Activated CD4-positive, alpha-beta T cell treated with anti-CD3 and anti-CD28 coated beads, Interleukin-2, amount 10 ng/mL, durations not matched to agents 24 days and 14 days (primary cell): ENCODE measurements at regions of chr12 and their contacts with region 1.

Region 1: DNA sequence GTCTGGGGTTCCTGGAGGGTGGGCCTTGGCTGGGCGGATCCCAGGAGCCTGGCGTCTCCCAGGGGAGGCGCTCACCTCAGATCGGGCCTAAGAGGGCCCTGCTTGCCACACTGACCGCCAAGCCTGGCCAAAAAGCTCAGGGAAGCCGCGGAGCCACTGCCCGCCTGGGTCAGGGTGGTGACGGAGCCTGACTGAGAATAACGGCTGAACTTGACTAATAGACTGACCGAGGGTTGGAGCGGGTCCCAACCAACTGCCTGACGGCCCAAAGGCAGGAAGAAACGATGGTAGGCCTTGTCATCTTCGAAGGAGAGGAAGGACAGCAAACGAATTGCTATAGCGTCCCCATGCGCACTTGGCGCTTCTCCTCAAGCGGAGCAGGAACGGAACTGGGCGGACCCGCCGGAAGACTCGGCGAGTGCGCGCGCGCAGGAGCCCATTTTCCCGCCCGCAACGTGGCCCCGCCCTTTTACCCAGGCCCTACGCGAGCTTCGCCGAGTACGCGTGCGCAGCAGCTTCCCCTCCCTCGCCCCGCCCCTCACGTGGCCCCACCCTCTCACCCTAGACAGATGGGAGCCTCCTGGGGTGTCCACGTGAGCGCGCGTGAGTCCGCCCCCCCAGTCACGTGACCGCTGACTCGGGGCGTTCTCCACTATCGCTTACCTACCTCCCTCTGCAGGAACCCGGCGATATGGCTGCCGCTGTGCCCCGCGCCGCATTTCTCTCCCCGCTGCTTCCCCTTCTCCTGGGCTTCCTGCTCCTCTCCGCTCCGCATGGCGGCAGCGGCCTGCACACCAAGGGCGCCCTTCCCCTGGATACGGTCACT is at the starts of genes ERP29 and TMEM116:
- DNase-seq: peak; percentile 100
- H3K4me3 Mint-ChIP-seq: peak within 1 kb of the TSS; percentile 93
- H3K27ac Mint-ChIP-seq: peak within 1 kb of the TSS; percentile 98
- H3K4me1 Mint-ChIP-seq: peaks cover 42% of the 10 kb centered on the region
- H3K27me3 Mint-ChIP-seq: no peaks in the 10 kb centered on the region
- total RNA-seq, gene ERP29: 56.6 and 60.9 TPM in 2 replicates
- total RNA-seq, gene TMEM116: 9.7 and 11.1 TPM in 2 replicates

Region 2: DNA sequence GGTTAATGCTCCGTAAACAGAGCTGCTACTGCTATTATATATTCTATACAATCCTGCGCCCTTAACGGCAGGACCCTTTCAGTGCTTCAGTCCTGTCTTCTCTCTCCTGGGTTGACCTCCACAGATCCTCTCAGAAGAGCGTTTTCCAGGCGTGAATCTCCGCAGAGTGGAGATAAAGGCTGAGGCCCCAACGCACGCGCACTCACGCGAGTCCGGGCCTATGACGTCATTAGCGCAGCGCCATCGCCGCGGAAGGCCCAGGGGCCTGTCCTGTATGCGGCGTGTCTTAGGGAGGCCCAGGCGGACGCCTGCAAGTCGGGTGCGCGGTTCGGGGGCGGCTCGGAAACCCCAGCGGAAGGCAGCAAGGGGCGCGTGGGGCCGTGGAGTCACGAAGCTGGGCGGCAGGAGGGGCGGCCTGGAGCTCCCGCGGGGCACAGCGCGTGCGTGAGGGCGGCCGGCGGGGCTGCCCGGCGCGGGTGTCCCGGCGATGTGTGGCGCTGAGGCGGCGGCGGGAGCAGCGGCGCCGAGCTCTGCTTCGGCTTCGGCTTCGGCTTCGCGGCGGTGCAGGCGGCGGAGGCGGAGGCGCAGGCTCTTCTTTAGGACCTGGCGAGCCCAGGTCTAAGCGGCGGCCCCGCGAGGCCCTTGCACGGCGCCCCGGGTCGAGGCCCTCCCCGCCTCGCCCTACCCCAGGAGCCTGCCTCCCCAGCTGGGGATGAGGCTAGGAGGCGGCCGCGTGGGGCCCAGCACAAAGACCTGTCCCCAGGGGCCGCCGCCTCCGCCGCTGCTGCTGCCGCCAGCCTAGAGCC is 171.0 kb before region 1 on chr12 and contains the start of gene MAPKAPK5:
- intact Hi-C with region 1: loop called (anchors 1 kb)
- DNase-seq: peak; percentile 99
- H3K4me3 Mint-ChIP-seq: peak within 1 kb of the TSS; percentile 98
- H3K27ac Mint-ChIP-seq: peak within 1 kb of the TSS; percentile 98
- H3K4me1 Mint-ChIP-seq: peaks cover 40% of the 10 kb centered on the region
- H3K27me3 Mint-ChIP-seq: peaks cover 2% of the 10 kb centered on the region
- total RNA-seq, gene MAPKAPK5: 76.0 and 80.2 TPM in 2 replicates

Region 3: DNA sequence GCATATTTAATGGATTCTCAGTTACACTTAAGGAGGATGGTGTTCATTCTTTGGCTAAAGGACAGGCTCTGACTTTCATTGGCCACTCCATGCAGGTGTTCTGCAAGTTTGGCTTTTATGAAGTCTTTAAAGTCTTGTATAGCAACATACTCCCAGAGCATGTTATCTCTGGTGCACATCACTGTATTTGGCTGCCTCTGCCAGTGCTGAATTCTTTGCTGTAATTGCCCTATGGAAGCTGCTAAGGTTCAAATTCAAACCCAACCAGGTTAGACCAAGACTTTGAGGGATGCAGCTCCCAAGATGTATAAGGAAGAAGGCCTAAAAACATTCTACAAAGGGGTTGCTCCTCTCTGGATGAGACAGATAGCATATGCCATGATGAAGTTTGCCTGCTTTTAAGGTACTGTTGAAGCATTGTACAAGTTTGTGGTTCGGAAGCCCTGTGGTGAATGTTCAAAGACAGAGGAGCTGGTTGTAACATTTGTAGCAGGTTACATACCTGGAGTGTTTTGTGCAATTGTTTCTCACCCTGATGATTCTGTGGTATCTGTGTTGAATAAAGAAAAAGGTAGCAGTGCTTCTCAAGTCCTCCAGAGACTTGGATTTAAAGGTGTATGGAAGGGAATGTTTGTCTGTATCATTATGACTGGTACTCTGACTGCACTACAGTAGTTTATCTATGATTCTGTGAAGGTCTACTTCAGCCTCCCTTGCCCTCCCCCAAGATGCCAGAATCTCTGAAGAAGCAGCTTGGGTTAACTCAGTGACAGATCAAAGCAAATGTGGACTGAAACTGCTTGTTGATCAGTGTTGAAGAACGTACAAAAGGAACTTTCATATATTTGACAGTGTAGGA is 19.5 kb before region 1 on chr12:
- intact Hi-C with region 1: loop called (anchors 1 kb)
- DNase-seq: peak; percentile 84
- H3K4me3 Mint-ChIP-seq: peak overlapping the region; percentile 86
- H3K27ac Mint-ChIP-seq: peak overlapping the region; percentile 76
- H3K4me1 Mint-ChIP-seq: peaks cover 49% of the 10 kb centered on the region
- H3K27me3 Mint-ChIP-seq: no peaks in the 10 kb centered on the region

Region 4: DNA sequence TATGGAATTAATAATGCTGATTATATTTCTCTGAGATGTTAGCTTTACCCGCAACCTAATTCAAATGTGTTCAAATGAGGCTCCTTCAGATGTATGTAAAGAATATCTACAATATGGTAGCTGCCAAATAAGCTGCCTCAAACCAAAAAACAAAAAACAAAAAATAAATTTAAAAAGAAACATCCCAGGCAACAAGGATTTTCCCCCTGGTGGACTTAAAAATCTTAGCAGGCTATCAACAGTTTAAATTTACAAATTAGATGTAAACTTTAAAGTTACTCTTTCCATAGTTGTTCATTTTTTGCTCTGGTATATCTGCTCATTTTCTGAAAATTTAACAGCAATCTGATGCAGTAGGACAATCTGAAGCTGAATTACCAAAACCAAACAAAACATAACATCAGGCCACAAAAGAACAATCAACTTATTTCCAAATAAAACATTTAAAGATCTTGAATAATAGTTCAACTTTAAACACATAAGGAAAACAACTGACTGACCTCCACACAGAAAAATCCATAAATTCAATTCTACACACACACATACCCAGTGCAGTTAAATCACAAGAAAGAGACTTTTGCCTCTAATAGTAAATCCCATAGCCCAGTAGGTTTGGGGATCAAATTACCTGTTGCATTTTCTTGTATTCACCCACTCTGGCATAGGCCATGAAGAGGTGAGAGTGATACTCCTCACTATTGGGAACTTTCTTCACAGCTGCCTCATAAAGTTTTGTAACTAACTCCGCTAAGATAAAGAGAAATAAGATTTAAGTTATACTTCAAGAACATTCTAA is 74.3 kb after region 1 on chr12:
- intact Hi-C with region 1: loop called (anchors 2 kb)
- DNase-seq: no peak
- H3K4me3 Mint-ChIP-seq: no peak overlapping the region
- H3K27ac Mint-ChIP-seq: no peak overlapping the region
- H3K4me1 Mint-ChIP-seq: peaks cover 21% of the 10 kb centered on the region
- H3K27me3 Mint-ChIP-seq: no peaks in the 10 kb centered on the region

Region 5: DNA sequence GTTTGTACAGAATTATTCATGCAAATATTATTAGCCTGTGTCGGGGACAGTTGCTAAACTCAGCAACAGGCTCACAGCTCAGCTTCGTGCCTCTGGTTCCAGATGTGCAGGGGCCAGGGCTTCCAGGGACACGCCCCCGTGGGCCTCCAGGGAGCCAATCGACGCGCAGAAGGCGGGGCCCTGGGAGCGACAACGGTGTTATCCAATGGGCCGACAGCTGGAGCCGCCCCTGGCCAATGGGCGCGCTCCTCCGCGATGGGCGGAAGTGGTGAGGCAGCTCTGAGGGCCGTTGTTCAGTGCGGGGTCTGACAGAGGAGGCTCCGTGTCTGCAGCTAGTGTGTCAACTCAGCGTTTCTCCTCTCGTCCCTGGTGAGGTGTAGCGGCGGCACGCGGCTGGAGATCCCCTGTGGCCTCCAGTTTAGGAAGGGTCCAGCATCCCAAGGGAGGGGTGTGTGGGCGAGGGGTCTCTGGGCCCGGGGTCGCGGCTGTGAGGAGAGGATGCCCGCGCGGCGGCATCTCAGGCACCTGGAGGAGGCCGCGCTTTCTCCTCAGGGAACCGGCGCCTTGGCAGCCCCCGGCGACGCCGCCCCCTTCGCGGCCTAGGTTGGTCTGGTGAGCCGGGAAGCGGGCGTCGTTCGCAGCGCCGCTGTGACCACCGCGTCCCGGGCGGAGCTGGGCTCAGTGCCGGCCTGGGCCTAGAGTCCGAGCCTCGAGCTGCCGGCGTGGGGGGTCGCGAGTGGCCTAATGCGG is 112.4 kb after region 1 on chr12 and contains the start of gene TRAFD1:
- intact Hi-C with region 1: loop called (anchors 1 kb)
- DNase-seq: peak; percentile 100
- H3K4me3 Mint-ChIP-seq: peak within 1 kb of the TSS; percentile 82
- H3K27ac Mint-ChIP-seq: peak within 1 kb of the TSS; percentile 88
- H3K4me1 Mint-ChIP-seq: peaks cover 32% of the 10 kb centered on the region
- H3K27me3 Mint-ChIP-seq: peaks cover 4% of the 10 kb centered on the region
- total RNA-seq, gene TRAFD1: 45.6 and 48.3 TPM in 2 replicates

Region 6: GRCh38 chr12:112409064-112409905 is 396.3 kb after region 1 on chr12 and contains the start of gene RPL6:
- intact Hi-C with region 1: loop called (anchors 2 kb)
- DNase-seq: peak; percentile 94
- H3K4me3 Mint-ChIP-seq: peak within 1 kb of the TSS; percentile 93
- H3K27ac Mint-ChIP-seq: peak within 1 kb of the TSS; percentile 100
- H3K4me1 Mint-ChIP-seq: peaks cover 27% of the 10 kb centered on the region
- H3K27me3 Mint-ChIP-seq: no peaks in the 10 kb centered on the region
- total RNA-seq, gene RPL6: 1,820 and 1,848 TPM in 2 replicates